HEK293T (cell line): ENCODE measurements at regions of chr2 and their contacts with region 1.

Region 1: GRCh38 chr2:65710779-65711295 is 278.4 kb upstream of the SPRED2 start:
- DNase-seq: peak; percentile 55

Region 2: DNA sequence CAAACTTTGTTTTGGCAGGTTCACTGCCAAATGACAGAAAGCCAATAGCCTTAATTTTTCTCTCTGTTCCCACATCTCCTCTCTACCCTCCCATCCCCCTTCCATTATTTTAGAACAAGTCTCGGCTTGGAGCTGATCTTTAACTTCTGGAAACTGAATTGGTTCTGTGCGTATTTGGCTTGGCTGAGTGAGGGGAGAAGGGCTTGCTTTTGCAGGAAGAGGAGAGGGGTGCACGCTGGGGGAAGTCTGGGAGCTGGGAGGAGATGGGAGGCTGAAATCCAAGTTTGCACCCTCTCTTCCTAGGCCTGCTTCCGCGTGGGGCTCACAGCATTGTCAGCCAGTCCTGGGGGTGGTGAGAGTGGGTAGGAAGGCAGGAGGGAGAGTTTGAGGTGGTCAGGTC is 102.4 kb before region 1 on chr2:
- CTCF ChIA-PET with region 1: no interaction called
- POLR2A ChIA-PET with region 1: no interaction called
- DNase-seq: no peak

Region 3: DNA sequence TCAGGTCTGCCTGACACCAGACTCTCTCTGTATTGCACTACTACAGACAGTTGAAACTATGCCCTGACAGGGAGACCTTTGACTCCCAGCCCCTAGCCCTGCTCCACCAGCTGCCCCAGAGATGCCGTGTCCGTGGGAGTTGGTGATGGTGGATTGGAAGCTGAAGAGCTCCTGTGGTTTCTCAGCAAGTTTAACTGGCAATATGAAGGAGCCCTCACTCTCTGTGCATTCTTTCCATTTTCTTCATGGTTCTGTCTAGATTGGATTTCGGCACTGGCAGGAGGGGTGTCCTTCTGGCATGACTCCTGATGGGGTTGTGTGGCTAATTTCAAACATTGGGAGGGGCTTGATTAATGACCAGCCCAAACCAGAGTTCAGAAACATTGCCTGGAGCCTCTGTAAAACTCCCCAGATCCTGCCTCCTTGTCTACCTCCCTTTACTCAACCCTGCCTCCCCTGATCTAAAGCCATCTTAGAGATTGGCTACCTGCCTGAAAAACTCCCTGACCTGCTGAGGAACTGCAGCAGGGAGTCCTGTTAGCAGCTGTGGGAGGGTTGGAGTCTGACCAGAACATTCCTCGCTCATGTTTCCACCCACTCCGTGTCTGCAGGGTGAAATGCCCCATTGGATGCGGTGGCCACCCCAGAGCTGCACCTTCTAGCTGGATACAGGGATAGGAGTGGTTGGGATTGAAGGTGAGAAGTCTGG is 71.5 kb before region 1 on chr2:
- CTCF ChIA-PET with region 1: interaction called, 10 read pairs
- POLR2A ChIA-PET with region 1: interaction called, 4 read pairs
- DNase-seq: no peak

Region 4: DNA sequence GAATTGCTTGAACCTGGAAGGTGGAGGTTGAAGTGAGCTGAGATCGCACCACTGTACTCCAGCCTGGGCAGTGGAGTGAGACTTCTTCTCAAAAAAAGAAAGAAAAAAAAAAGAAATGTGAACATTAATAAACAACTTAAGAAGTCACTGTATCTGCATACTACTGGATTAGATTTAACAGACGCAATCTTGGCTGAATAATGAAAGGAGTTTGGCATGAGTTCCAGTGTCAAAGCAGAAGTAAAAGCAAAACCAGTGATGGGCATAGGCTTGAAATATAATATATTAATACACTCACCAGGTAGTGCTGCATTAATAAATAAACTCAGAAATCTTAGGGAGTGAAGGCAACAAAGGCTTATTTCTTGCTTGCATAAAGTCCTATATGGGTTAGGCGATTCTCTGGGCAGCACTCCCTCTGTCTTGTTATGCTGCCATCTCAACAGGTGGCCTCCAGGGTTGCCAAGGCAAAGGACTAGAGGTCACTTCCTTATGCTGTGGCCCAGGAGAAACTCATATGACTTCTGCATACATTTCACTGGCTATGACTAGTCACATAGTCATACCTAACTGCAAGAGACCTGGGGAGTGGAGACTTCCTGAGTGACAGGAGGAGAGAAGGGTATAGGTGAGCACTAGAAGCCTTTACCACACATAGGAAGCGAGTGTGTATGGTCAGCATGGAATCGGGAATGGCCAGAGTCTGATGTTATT is 17.8 kb after region 1 on chr2:
- CTCF ChIA-PET with region 1: no interaction called
- POLR2A ChIA-PET with region 1: no interaction called
- DNase-seq: no peak

Region 5: DNA sequence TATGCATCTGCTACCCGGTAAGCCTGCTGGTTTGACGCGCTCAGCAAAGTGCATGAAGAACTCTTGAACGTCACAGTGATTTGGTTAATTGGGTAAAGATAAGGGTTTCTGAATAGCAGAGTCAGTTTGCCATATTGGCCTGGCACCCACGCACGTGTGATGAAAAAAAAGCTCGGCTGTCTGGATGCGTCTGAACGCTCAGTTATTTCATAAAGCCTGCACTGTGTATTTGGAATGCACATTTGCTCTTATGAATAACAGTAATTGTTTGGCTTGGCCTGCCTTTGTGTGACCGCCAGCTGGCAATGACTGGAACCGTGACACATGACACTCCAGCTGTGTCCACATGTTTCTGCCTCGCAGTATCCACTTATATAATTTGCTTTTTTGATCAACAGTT is 594.9 kb after region 1 on chr2:
- CTCF ChIA-PET with region 1: no interaction called
- POLR2A ChIA-PET with region 1: no interaction called
- DNase-seq: no peak